HCT116 (cell line): ENCODE measurements at regions of chr1 and their contacts with region 1.

Region 1: GRCh38 chr1:158203693-158204457 is 23.2 kb downstream of the CD1D start:
- DNase-seq: peak; percentile 69
- ATAC-seq: peak; percentile 97
- H3K4me3 ChIP-seq: no peak overlapping the region
- H3K27ac ChIP-seq: no peak overlapping the region
- H3K4me1 ChIP-seq: no peaks in the 10 kb centered on the region
- H3K27me3 ChIP-seq: peaks cover 10% of the 10 kb centered on the region; the same call in 1 of the 2 replicates
- CTCF ChIP-seq: peak; percentile 54 to 76 (median 70); a peak in 5 of 6 replicates
- POLR2A ChIP-seq: no peak
- RAD21 ChIP-seq: peak; percentile 68

Region 2: GRCh38 chr1:158124999-158125398 is 78.9 kb before region 1 on chr1:
- CTCF ChIA-PET with region 1: no interaction called
- POLR2A ChIA-PET with region 1: no interaction called
- RAD21 ChIA-PET with region 1: no interaction called
- intact Hi-C with region 1: no loop called
- DNase-seq: peak; percentile 89
- ATAC-seq: peak; percentile 92
- H3K4me3 ChIP-seq: no peak overlapping the region
- H3K27ac ChIP-seq: no peak overlapping the region
- H3K4me1 ChIP-seq: 0 out of 4 replicates have a peak, but pooled peaks cover 0 to 2% of the 10 kb centered on the region in 2 experiments
- H3K27me3 ChIP-seq: peaks cover 5% of the 10 kb centered on the region; the same call in 1 of the 2 replicates
- CTCF ChIP-seq: peak; percentile 94 to 96 (median 95)
- POLR2A ChIP-seq: no peak
- RAD21 ChIP-seq: peak; percentile 97

Region 3: GRCh38 chr1:158329733-158330132 is 125.9 kb after region 1 on chr1:
- CTCF ChIA-PET with region 1: interaction called, 15 read pairs
- POLR2A ChIA-PET with region 1: no interaction called
- RAD21 ChIA-PET with region 1: no interaction called
- intact Hi-C with region 1: loop called (anchors 5 kb)
- DNase-seq: no peak
- ATAC-seq: peak; percentile 47; the same call in 1 of the 2 replicates
- H3K4me3 ChIP-seq: no peak overlapping the region
- H3K27ac ChIP-seq: no peak overlapping the region
- H3K4me1 ChIP-seq: no peaks in the 10 kb centered on the region
- H3K27me3 ChIP-seq: peaks cover 16% of the 10 kb centered on the region; the same call in 1 of the 2 replicates
- CTCF ChIP-seq: peak; percentile 10 to 31 (median 20); a peak in 2 of 6 replicates
- POLR2A ChIP-seq: no peak
- RAD21 ChIP-seq: peak; percentile 17; the same call in 1 of the 2 replicates

Region 4: DNA sequence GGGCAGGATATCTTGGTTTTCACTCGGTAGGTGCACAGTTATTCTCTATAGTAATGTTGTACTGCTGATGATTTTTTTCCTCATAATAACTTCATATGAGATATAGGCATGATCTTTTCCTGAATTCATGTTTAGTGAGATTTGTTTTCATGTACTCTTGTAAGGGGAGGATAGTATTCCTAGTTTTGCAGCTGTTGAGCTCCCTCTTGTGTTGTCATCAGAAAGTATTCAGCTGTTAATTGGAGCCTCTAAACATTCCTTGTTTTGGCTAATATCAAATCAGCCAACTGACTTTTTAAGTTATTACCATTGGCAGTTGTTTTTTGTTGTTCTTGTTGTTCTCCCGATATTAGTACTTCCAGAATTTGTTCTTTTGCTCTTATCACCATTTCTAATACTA is 292.5 kb after region 1 on chr1:
- CTCF ChIA-PET with region 1: interaction called, 13 read pairs
- POLR2A ChIA-PET with region 1: no interaction called
- RAD21 ChIA-PET with region 1: no interaction called
- intact Hi-C with region 1: no loop called
- DNase-seq: no peak
- ATAC-seq: no peak
- H3K4me3 ChIP-seq: no peak overlapping the region
- H3K27ac ChIP-seq: no peak overlapping the region
- H3K4me1 ChIP-seq: no peaks in the 10 kb centered on the region
- H3K27me3 ChIP-seq: no peaks in the 10 kb centered on the region
- CTCF ChIP-seq: 0 out of 6 replicates have a peak, but pooled peaks of 1 of the 3 experiments have one; percentile 25
- POLR2A ChIP-seq: no peak
- RAD21 ChIP-seq: 0 out of 2 replicates have a peak, but pooled peaks have one; percentile 17

Region 5: GRCh38 chr1:158998781-158999161 is 794.9 kb after region 1 on chr1:
- CTCF ChIA-PET with region 1: interaction called, 3 read pairs
- POLR2A ChIA-PET with region 1: no interaction called
- RAD21 ChIA-PET with region 1: no interaction called
- intact Hi-C with region 1: loop called (anchors 1 kb)
- DNase-seq: peak; percentile 32
- ATAC-seq: peak; percentile 63
- H3K4me3 ChIP-seq: no peak overlapping the region
- H3K27ac ChIP-seq: no peak overlapping the region
- H3K4me1 ChIP-seq: peaks cover 6 to 8% of the 10 kb centered on the region in 2 experiments
- H3K27me3 ChIP-seq: no peaks in the 10 kb centered on the region
- CTCF ChIP-seq: peak; percentile 51 to 89 (median 66); a peak in 5 of 6 replicates
- POLR2A ChIP-seq: no peak
- RAD21 ChIP-seq: peak; percentile 75

Region 6: GRCh38 chr1:159056069-159056698 is 852.3 kb after region 1 on chr1:
- CTCF ChIA-PET with region 1: no interaction called
- POLR2A ChIA-PET with region 1: no interaction called
- RAD21 ChIA-PET with region 1: no interaction called
- intact Hi-C with region 1: no loop called
- DNase-seq: no peak
- ATAC-seq: peak; percentile 67
- H3K4me3 ChIP-seq: no peak overlapping the region
- H3K27ac ChIP-seq: no peak overlapping the region
- H3K4me1 ChIP-seq: no peaks in the 10 kb centered on the region
- H3K27me3 ChIP-seq: peaks cover 4% of the 10 kb centered on the region; the same call in 1 of the 2 replicates
- CTCF ChIP-seq: peak in 2 of 3 experiments; percentile 21 to 44; a peak in 3 of 6 replicates
- POLR2A ChIP-seq: no peak
- RAD21 ChIP-seq: no peak

Region 7: GRCh38 chr1:159071970-159072582 is 868.2 kb after region 1 on chr1:
- CTCF ChIA-PET with region 1: interaction called, 11 read pairs
- POLR2A ChIA-PET with region 1: no interaction called
- RAD21 ChIA-PET with region 1: no interaction called
- intact Hi-C with region 1: loop called (anchors 2 kb)
- DNase-seq: peak; percentile 48
- ATAC-seq: peak; percentile 83
- H3K4me3 ChIP-seq: no peak overlapping the region
- H3K27ac ChIP-seq: no peak overlapping the region
- H3K4me1 ChIP-seq: no peaks in the 10 kb centered on the region
- H3K27me3 ChIP-seq: no peaks in the 10 kb centered on the region; the same call in 1 of the 2 replicates
- CTCF ChIP-seq: peak; percentile 46 to 67 (median 50); a peak in 5 of 6 replicates
- POLR2A ChIP-seq: no peak
- RAD21 ChIP-seq: peak; percentile 66